Naive thymus-derived CD4-positive, alpha-beta T cell (primary cell): ENCODE measurements at regions of chr12 and their contacts with region 1.

Region 1: DNA sequence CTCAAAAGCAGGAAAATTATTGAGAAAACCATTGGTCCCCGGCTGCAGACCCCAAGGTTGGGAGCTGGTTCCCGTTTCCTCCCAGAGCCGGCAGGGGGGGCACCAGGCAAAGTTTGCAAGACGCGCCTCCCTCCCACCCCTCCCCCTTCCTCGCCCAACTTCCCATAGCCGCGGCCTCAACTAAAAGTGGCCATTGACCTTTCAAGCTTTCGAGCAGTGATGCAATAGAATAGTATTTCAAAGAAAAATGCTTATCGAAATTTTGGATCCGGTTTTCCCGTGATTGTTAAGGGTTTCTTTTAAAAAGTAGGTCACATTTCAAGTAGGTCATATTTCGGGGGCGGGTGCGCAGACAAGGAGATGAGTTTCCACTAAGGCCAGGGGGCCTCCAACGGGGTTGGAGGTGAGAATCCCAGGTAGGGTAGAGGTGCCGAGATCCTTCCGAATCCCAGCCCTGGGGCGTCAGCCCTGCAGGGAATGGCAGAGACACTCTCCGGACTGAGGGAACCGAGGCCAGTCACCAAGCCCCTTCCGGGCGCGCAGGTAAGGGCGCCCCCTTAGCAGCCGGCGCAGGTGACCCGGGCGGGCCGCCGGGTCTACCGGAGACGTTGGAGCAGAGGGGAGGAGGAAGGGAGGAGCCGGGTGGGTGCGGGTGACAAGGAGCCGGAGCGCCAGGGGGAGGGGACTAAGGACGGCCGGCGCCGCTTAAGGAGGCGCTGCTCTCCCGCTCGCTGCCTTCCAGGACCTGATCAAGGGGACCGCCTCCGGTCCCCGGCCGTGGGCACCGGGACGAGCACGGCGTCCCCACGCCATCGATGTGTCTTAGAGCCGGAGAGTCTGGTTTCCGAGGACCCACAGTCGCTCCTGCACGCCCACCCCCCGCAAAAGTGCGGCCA is 2.6 kb upstream of the SOCS2 start:
- DNase-seq: peak; percentile 34 to 76 (median 66)
- ATAC-seq: peak; percentile 58
- H3K4me3 ChIP-seq: peak overlapping the region; percentile 89
- H3K4me3 Mint-ChIP-seq: peak overlapping the region; percentile 88 to 98 (median 93)
- H3K27ac ChIP-seq: peak overlapping the region; percentile 78
- H3K27ac Mint-ChIP-seq: peak overlapping the region; percentile 70 to 91 (median 84)
- H3K4me1 ChIP-seq: peaks cover 14 to 16% of the 10 kb centered on the region in 2 donors
- H3K4me1 Mint-ChIP-seq: peaks cover 24 to 37% (median 30%) of the 10 kb centered on the region in 7 donors
- H3K27me3 ChIP-seq: no peaks in the 10 kb centered on the region
- H3K27me3 Mint-ChIP-seq: peaks cover 0 to 15% (median 0%) of the 10 kb centered on the region in 5 donors

Region 2: GRCh38 chr12:91877022-91877421 is 1692.9 kb before region 1 on chr12:
- CTCF ChIA-PET with region 1: no interaction called
- POLR2A ChIA-PET with region 1: no interaction called
- intact Hi-C with region 1: loop called in 1 of 2 experiments (anchors 10 kb)
- DNase-seq: peak; percentile 51 to 97 (median 93)
- ATAC-seq: peak; percentile 94
- H3K4me3 ChIP-seq: peak overlapping the region; percentile 39
- H3K4me3 Mint-ChIP-seq: peak overlapping the region; percentile 77 to 88 (median 82)
- H3K27ac ChIP-seq: peak overlapping the region; percentile 92
- H3K27ac Mint-ChIP-seq: peak overlapping the region; percentile 95 to 100 (median 99)
- H3K4me1 ChIP-seq: peaks cover 59% of the 10 kb centered on the region in 2 donors
- H3K4me1 Mint-ChIP-seq: peaks cover 40 to 85% (median 80%) of the 10 kb centered on the region in 7 donors
- H3K27me3 ChIP-seq: no peaks in the 10 kb centered on the region
- H3K27me3 Mint-ChIP-seq: no peaks in the 10 kb centered on the region

Region 3: DNA sequence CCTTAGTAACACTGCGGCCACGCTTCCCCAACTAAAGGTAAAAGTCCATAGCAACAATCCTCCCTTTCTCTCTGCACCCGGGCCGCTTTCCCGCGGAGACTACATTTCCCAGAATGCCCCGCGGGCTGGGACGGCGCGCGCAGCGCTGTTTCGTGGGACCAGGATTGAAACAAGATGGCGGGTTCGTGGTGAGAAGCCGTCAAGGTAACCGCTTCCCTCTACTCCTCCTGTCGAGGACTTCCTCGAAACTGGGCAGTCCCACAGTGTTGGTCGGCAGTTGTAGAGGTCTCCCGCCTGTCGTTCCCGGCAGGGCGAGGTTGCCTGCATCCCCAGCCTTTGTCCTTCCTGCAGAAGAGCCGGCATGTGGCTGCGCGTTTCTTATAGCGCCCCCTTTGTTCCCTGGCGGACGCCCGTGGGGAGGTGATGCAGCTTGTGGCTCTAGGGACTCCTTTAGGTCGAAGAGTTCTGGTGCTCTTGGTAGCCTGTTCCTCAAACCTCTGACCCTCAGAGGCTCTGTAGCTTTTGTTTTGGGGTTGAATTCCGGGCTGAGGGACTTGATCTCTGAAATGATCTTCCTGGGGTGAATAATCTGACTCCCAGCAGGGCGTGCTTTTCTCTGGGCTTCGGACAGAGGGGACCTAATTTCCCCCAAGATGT is 102.4 kb before region 1 on chr12 and contains the start of gene MRPL42:
- CTCF ChIA-PET with region 1: no interaction called
- POLR2A ChIA-PET with region 1: no interaction called
- intact Hi-C with region 1: loop called (anchors 1 kb)
- DNase-seq: peak; percentile 86 to 96 (median 94)
- ATAC-seq: peak; percentile 97
- H3K4me3 ChIP-seq: peak within 1 kb of the TSS; percentile 94
- H3K4me3 Mint-ChIP-seq: peak within 1 kb of the TSS; percentile 85 to 96 (median 93)
- H3K27ac ChIP-seq: peak within 1 kb of the TSS; percentile 85
- H3K27ac Mint-ChIP-seq: peak within 1 kb of the TSS; percentile 90 to 98 (median 95)
- H3K4me1 ChIP-seq: peaks cover 8 to 10% of the 10 kb centered on the region in 2 donors
- H3K4me1 Mint-ChIP-seq: peaks cover 28 to 48% (median 36%) of the 10 kb centered on the region in 7 donors
- H3K27me3 ChIP-seq: no peaks in the 10 kb centered on the region
- H3K27me3 Mint-ChIP-seq: no peaks in the 10 kb centered on the region
- total RNA-seq, gene MRPL42: 30.1 to 65.8 (median 45.6) TPM

Region 4: GRCh38 chr12:93766796-93767523 is 197.1 kb after region 1 on chr12:
- CTCF ChIA-PET with region 1: interaction called, 6 read pairs
- POLR2A ChIA-PET with region 1: no interaction called
- intact Hi-C with region 1: loop called (anchors 1 kb)
- DNase-seq: peak in 6 of 9 donors; percentile 23 to 58 (median 28)
- ATAC-seq: peak; percentile 84
- H3K4me3 ChIP-seq: no peak overlapping the region
- H3K4me3 Mint-ChIP-seq: peak overlapping the region in 5 of 10 donors; percentile 0 to 53 (median 6)
- H3K27ac ChIP-seq: no peak overlapping the region
- H3K27ac Mint-ChIP-seq: peak overlapping the region in 7 of 9 donors; percentile 6 to 74 (median 27)
- H3K4me1 ChIP-seq: no peaks in the 10 kb centered on the region
- H3K4me1 Mint-ChIP-seq: peaks cover 11 to 53% (median 17%) of the 10 kb centered on the region in 7 donors
- H3K27me3 ChIP-seq: no peaks in the 10 kb centered on the region
- H3K27me3 Mint-ChIP-seq: no peaks in the 10 kb centered on the region

Region 5: DNA sequence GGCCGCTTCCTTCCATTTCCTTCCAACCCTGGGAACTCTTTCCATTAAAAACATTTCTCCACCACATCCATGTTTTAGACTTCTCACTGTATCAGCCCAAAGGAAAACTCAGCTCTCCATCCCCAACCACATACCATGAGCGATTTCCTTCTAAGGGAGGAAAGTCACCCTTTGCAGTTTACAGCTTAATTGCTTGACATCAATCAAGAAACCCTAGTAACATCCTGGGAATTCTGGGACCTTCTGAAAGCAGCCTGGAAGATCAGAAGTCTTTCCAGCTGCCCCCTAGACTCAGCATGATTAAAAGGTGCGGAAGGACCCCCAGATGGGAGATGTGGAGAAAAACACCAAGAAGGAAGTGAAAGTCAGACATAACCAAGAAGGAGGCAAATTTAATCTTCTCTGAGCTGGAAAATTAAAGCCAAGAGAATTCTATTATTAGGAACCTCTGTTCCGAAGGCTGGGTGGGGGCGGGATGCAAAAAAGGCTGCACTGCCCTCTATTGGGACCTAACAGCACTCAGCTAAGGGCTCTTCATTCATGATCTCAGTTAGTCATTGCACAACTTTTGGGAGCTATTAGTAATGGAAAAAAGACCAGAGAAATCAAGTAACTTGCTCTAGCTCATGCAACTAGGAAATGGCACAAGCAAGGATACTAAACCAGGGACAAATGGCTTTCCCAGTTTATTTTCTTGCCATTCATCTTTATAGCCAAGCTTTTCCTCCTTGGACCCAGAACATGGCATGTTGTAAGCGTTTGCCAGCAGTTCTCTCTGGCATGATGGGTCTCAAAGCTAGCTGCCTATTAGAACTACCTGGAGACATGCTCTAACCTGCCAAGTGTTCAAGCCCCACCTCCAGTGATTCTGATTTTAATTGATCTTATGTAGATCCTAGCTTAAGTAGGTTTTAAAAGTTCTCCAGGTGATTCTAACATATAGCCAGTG is 505.4 kb after region 1 on chr12:
- CTCF ChIA-PET with region 1: interaction called, 22 read pairs
- POLR2A ChIA-PET with region 1: no interaction called
- intact Hi-C with region 1: loop called in 1 of 2 experiments (anchors 1 kb)
- DNase-seq: peak in 1 of 9 donors; percentile 20
- ATAC-seq: peak; percentile 67
- H3K4me3 ChIP-seq: no peak overlapping the region
- H3K4me3 Mint-ChIP-seq: no peak overlapping the region
- H3K27ac ChIP-seq: no peak overlapping the region
- H3K27ac Mint-ChIP-seq: no peak overlapping the region
- H3K4me1 ChIP-seq: peaks cover 0 to 20% of the 10 kb centered on the region in 2 donors
- H3K4me1 Mint-ChIP-seq: peaks cover 18 to 67% (median 28%) of the 10 kb centered on the region in 7 donors
- H3K27me3 ChIP-seq: no peaks in the 10 kb centered on the region
- H3K27me3 Mint-ChIP-seq: peaks cover 0 to 6% (median 3%) of the 10 kb centered on the region in 5 donors

Region 6: DNA sequence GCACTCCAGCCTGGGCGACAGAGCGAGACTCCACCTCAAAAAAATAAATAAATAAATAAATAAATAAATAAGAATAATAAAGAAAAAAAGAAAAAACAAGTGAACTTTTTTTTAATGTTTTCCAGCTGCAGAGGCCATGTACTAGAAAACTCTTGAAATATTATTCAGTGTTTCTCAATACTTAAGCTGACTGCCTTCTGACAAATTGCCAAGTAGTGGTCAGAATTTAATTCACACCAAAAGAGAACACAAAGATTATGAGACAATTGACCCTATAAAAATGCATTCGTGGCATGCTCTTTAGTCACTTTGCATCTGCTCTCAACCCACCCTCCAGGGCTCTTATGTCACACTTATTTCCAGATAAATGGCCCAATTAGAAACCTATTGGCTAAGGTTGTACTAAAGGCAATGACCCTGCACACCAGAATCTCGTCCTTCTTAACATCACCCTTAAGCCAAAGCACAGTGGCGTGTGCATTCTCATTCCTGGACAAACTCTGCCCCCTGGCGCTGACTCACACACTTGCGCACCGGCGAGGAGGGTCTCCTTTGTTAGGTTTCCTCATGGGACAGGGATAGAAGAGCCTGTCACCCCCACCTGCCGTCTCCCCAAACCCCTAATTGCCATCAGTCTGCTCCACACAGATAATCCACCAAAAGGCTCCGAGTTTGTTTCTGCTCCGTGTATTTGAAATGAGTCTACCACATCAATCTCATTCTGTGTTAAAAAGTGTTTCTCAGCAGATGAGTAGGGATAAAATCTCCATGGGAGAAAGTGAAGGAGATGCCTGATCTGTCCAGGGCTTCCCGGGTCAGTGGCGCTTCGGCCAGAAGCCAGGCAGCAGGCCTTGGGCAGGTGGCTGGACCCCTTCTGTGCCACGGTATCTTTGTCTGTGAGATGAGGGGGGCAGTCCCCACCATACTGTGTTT is 962.9 kb after region 1 on chr12:
- CTCF ChIA-PET with region 1: no interaction called
- POLR2A ChIA-PET with region 1: no interaction called
- intact Hi-C with region 1: loop called in 1 of 2 experiments (anchors 1 kb)
- DNase-seq: peak; percentile 20 to 68 (median 56)
- ATAC-seq: peak; percentile 80
- H3K4me3 ChIP-seq: no peak overlapping the region
- H3K4me3 Mint-ChIP-seq: no peak overlapping the region
- H3K27ac ChIP-seq: no peak overlapping the region
- H3K27ac Mint-ChIP-seq: no peak overlapping the region
- H3K4me1 ChIP-seq: no peaks in the 10 kb centered on the region
- H3K4me1 Mint-ChIP-seq: peaks cover 0 to 17% (median 3%) of the 10 kb centered on the region in 7 donors
- H3K27me3 ChIP-seq: no peaks in the 10 kb centered on the region
- H3K27me3 Mint-ChIP-seq: peaks cover 3 to 19% (median 8%) of the 10 kb centered on the region in 5 donors

Region 7: DNA sequence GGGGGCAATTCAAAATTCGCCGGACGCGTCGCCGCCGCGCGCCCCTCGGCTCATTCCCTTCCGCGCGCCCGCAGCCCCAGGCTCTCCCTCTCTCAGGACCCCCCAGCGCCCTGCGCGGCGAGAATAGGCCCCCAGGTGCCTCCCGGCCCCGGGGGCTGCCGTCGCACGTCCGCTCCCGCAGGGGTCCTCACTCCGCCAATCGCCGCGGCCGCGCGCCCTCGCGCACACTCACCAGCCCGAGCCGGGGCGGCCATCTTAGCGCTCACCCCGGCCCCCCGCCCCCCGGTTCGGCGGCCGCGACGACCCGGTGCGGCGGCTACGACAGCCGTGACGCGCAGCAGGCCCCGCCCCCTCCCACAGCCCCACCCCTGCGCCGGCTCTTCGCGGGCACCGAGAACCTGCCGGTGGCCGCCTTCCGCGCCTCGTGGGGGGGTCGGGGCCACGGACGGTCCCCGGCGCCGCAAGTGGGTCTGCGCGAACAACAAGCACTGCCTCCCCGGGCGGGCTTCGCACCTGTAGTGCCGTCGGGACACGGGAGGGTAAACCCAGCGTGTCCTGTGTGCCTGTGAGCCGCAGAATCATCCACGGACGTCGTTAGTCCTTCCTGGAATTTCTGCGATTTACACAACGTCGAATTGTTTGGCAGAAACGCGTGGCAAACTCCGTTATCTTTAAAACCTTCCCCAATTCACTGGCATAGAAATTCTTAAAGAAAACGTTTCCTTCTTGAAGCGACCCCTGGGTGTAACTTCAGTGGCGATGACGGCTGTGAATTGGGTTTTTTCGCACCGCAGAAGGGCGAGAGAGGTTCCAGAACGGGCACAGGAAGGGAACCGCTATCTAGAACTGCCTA is 1978.9 kb after region 1 on chr12:
- CTCF ChIA-PET with region 1: no interaction called
- POLR2A ChIA-PET with region 1: no interaction called
- intact Hi-C with region 1: loop called in 1 of 2 experiments (anchors 5 kb)
- DNase-seq: peak; percentile 66 to 81 (median 77)
- ATAC-seq: peak; percentile 94
- H3K4me3 ChIP-seq: peak overlapping the region; percentile 75
- H3K4me3 Mint-ChIP-seq: peak overlapping the region; percentile 89 to 96 (median 94)
- H3K27ac ChIP-seq: peak overlapping the region; percentile 96
- H3K27ac Mint-ChIP-seq: peak overlapping the region; percentile 70 to 98 (median 94)
- H3K4me1 ChIP-seq: peaks cover 6 to 23% of the 10 kb centered on the region in 2 donors
- H3K4me1 Mint-ChIP-seq: peaks cover 36 to 73% (median 61%) of the 10 kb centered on the region in 7 donors
- H3K27me3 ChIP-seq: no peaks in the 10 kb centered on the region
- H3K27me3 Mint-ChIP-seq: peaks cover 0 to 22% (median 7%) of the 10 kb centered on the region in 5 donors